ENCODE measurements at regions of chr19 and their contacts with region 1.

Region 1: DNA sequence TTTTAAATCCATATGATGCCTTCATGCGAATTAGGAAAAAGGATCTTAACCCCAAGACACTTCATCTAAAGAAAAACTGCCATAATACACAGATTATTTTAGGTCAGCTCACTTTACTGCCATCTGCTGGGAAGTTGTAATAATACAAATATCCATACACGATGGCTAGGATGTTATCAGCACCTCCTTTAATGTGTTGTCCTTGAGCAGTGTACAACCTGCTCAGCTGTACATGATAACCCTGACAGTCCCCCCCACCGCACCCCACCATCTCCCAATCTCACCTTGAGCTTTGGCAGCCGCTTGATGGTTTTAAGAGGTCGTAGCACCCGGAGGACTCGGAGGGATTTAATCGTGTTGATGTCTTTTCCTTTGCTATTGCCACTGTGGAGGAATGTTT is 112.2 kb downstream of the IER2 start:
- DNase-seq: no peak

Region 2: DNA sequence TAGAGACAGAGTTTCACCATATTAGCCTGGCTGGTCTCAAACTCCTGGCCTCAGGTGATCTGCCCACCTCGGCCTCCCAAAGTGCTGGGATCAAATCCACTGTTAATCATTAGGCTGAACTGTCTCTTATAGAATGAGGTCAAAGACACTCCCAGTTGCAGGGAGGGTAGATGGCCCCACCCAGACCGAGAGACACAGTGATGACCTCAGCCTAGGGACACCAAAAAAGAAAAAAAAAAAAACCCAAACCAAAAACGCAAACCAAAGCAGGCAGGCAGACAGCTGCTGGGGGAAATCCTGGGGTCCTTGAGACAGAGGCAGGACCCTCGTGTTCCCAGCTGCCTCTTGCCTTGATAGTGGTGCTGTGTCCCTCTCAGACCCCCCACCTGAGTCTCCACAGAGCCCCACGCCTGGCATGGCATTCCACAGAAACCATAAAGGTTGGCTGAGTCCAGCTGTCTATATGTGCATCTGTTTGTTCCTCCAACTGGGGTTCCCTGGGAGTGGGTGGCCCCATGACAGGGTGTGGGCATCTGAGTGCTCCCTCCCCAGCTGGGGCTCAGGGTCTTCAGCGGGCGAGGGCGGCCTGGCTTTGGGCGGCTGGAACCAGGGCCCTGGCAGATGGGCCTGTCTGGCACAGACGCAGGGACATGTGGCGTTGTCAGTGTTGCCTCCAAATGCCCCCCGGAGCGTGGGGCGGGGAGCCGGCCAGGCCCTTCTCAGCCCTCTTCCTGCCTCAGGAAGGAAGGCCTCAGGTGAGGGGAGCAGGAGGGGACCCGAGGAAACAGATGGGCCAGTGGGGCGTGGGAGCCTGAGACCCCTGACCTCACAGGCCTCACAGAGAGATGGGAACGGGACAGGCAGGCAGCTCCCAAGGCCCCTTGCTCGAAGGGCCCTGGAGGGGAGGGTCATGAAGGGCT is 287.9 kb before region 1 on chr19:
- intact Hi-C with region 1: loop called in 1 of 2 experiments (anchors 5 kb)
- DNase-seq: no peak

Region 3: GRCh38 chr19:13195678-13196077 is 66.8 kb before region 1 on chr19:
- intact Hi-C with region 1: loop called in 1 of 2 experiments (anchors 5 kb)
- DNase-seq: no peak

Region 4: GRCh38 chr19:13212759-13213330 is 49.6 kb before region 1 on chr19:
- intact Hi-C with region 1: loop called in 1 of 2 experiments (anchors 5 kb)
- DNase-seq: no peak

Region 5: GRCh38 chr19:13294812-13295567 is 32.5 kb after region 1 on chr19:
- intact Hi-C with region 1: loop called in 1 of 2 experiments (anchors 1 kb)
- DNase-seq: no peak

Region 6: DNA sequence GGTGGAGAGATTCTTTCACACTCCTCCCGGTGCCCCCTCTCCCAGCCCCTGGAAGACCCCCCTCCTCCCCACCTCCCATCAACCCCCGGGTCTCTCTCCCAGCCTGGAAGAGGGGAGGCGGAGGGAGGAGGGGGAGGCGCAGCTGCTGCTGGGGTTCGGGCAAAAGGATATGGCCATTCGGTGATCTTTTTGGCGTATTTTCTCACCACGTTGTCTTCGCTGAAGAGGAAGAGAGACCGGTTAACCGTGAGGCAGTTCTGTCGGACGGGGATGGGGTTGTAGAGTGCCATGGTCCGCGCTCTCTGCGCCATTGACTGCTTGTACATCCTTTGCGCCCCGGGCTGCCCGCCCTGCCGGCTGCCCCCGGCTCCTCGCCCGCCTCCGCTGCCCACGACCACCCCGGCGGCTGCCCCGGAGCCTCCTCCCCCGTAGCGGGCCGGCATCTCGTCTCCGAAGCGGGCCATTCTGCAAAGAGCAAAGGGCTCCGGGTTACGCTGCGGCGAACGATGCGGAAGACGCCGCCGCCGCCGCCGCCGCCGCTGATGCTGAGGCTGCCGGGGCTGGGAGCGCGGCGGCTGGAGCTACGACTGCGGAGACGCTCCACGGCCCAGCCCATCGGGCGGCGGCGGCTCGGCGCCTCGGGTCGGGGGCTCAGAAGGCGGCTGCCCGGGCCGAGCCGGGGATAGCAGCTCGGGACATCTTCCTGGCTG is 243.5 kb after region 1 on chr19:
- intact Hi-C with region 1: no loop called
- DNase-seq: no peak

Measured in posterior vena cava (tissue), 2 donors.